Mammary epithelial cell (primary cell): ENCODE measurements at regions of chr7 and their contacts with region 1.

Region 1: DNA sequence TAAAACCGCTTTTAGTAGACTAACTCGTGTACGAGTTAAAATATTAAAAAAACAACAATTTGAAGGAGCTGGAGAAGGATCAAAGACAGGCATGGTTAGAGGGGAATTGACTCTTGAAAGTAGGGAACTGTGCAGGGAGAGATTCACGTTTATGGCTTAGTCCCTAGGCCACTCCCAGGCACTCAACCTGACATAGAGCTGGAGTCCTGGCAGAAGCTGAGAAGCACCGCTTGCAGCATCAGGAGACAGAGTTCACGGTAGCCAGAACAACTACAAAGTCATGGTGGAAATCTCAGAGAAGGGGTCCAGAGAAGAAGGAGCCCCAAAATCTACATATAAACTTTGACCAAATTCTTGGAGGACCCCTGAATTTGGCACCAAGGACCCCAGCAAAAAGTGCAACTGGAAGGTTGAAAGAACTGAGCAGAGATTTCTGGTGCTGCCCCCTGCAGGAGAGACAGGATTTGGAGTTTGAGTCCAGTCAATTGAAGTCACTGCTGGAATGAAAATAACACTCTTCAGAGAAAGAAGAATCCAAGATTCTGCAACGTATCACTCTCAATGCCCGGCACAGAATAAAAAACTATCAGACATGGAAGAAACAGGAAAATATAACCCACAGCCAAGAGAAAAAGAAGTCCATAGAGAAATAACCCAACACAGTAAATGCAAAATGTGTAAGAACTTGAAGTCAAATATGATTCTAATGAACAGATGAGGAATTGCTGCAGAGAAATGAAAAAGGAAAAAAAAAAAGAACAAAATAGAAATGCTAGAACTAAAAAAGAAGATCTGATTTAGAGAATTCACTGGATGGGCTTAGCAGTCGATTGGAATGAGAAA is 493.3 kb upstream of the PODXL start:
- DNase-seq: no peak
- H3K4me3 ChIP-seq: peak overlapping the region in 2 of 3 experiments; percentile 5 to 6
- H3K27ac ChIP-seq: no peak overlapping the region
- H3K4me1 ChIP-seq: no peaks in the 10 kb centered on the region
- H3K27me3 ChIP-seq: no peaks in the 10 kb centered on the region
- CTCF ChIP-seq: peak; percentile 75 to 76

Region 2: DNA sequence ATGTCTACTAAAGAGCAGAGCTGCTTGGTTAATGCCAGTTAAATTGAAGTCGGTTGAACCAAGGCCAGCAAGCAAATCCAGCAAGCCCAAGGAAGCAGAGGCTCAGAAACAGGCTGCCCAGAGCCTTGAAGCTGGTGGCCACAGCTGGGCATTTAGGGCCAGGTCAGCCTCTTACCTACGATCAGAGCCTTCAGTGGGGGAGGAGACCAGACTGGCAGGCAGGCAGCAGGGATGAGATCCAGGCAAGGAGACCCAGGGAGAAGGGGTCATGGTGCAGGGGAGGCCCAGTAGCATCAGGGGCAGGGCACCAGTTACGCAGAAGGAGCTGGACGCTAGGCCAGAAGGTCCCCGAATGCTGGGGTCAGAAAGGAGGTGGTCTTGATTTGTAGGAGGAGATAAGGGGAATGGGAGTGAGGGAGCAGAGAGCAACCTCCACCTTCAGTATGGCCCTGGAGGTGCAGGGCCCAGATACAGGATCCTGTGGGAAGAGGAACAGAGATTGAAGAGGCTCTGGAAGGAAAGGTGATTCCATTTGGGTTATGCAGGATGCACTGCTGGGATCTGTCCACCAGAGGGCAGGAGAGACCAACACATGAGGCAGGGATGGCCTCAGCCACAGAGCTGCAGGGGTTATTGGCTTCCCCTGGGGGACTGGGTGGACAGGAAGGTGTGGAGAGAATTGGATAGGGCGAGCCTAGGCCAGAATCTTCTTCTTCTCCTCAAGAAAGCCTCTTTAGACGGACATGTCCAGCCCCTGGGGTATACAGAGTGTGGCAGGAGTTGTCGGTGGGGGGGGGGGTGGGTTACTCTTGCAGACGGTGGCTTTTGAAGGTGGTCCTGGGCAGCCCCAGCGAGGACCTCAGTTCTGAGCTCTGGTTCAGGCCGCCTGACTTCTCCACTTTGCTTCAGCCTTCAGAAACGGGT is 360.7 kb before region 1 on chr7:
- CTCF ChIA-PET with region 1: no interaction called
- dilution Hi-C with region 1: no loop called
- in situ Hi-C with region 1: no loop called
- intact Hi-C with region 1: loop called (anchors 1 kb)
- DNase-seq: peak; percentile 31
- H3K4me3 ChIP-seq: no peak overlapping the region
- H3K27ac ChIP-seq: no peak overlapping the region
- H3K4me1 ChIP-seq: peaks cover 3% of the 10 kb centered on the region
- H3K27me3 ChIP-seq: no peaks in the 10 kb centered on the region
- CTCF ChIP-seq: peak; percentile 96

Region 3: DNA sequence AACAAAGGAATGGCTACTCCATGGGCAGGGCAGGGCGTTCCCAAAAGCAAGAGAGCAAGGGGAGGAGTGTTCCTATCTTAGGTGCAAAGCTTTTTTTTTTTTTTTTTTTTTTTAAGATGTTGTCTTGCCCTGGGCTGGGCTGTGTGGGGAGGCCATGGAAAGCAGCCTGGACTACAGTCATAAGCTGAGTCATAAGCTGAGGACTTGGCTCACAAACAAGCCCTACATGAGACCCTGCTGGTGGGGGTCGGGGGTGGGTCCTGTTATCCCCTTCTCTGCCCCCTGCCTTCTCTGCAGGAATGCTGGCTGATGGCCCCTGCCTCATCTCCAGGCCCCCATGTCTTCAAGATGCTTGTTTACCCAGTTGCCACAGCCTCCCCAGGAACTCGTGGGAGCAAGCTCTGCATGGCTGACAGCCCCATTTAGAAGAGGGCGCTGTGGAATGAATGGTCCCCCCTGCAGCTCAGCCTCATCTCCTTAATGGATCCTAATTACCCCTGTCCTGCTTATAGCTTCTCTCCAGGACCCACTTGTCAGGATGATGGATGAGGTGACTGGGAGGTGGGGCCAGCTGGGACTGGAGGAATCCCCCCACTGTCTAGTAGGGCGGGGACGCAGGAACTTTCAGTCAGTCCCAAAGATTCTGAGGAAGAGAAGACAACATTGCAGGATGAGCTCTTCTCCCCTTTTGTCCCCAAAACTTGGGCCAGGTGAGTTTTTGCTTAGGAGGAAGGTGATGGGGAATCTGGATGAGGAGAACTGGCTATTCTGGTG is 152.5 kb before region 1 on chr7:
- CTCF ChIA-PET with region 1: no interaction called
- dilution Hi-C with region 1: no loop called
- in situ Hi-C with region 1: no loop called
- intact Hi-C with region 1: no loop called
- DNase-seq: peak; percentile 52
- H3K4me3 ChIP-seq: no peak overlapping the region
- H3K27ac ChIP-seq: peak overlapping the region; percentile 73
- H3K4me1 ChIP-seq: peaks cover 47% of the 10 kb centered on the region
- H3K27me3 ChIP-seq: no peaks in the 10 kb centered on the region
- CTCF ChIP-seq: no peak

Region 4: GRCh38 chr7:131995328-131995727 is 54.4 kb before region 1 on chr7:
- CTCF ChIA-PET with region 1: no interaction called
- dilution Hi-C with region 1: no loop called
- in situ Hi-C with region 1: no loop called
- intact Hi-C with region 1: no loop called
- DNase-seq: no peak
- H3K4me3 ChIP-seq: no peak overlapping the region
- H3K27ac ChIP-seq: no peak overlapping the region
- H3K4me1 ChIP-seq: no peaks in the 10 kb centered on the region
- H3K27me3 ChIP-seq: no peaks in the 10 kb centered on the region
- CTCF ChIP-seq: no peak